Lower leg skin (tissue), 4 donors: ENCODE measurements at regions of chr14 and their contacts with region 1.

Region 1: DNA sequence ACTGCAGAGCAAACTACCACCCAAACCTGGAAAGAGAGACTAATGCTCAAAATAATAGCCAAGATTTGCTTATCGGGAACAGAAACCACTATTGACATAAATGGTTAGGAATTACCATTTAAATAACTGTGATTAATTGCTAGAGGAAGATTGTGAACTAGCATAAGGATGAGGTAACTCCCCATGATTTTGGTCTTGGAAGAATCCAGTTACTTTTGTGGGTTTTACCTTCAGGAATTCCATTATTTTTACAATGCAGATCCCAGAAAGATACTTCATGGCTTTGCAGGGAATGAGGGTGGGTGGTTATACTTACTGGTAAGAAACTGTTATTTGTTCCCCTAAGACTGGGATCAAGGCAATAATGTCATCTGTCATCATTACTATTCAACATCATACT is 652.9 kb upstream of the FLRT2 start:
- DNase-seq: no peak
- H3K4me3 ChIP-seq: no peak overlapping the region
- CTCF ChIP-seq: no peak
- POLR2A ChIP-seq: no peak

Region 2: DNA sequence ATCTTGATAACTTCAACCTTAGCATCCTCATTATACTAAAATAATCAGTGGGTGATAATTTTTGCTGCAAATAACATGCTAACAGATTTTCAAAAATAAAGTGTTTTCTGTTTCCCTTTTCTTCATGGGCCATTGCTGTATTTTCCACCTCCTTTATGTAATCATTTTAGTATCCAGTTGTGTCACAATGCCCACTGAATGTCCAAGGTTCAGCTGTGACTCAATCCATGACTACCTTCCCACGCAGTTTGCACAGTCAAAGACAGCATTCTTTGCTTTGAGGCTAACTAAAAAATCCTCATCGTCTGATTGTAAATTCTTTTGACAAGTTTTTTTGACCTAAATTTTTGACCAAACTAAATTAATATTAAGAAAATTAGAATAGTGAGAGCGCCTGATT is 1126.9 kb after region 1 on chr14:
- intact Hi-C with region 1: loop called (anchors 5 kb)
- DNase-seq: no peak
- H3K4me3 ChIP-seq: no peak overlapping the region
- CTCF ChIP-seq: no peak
- POLR2A ChIP-seq: no peak